Right ventricle myocardium inferior (tissue), 1 donor: ENCODE measurements at regions of chr3 and their contacts with region 1.

Region 1: DNA sequence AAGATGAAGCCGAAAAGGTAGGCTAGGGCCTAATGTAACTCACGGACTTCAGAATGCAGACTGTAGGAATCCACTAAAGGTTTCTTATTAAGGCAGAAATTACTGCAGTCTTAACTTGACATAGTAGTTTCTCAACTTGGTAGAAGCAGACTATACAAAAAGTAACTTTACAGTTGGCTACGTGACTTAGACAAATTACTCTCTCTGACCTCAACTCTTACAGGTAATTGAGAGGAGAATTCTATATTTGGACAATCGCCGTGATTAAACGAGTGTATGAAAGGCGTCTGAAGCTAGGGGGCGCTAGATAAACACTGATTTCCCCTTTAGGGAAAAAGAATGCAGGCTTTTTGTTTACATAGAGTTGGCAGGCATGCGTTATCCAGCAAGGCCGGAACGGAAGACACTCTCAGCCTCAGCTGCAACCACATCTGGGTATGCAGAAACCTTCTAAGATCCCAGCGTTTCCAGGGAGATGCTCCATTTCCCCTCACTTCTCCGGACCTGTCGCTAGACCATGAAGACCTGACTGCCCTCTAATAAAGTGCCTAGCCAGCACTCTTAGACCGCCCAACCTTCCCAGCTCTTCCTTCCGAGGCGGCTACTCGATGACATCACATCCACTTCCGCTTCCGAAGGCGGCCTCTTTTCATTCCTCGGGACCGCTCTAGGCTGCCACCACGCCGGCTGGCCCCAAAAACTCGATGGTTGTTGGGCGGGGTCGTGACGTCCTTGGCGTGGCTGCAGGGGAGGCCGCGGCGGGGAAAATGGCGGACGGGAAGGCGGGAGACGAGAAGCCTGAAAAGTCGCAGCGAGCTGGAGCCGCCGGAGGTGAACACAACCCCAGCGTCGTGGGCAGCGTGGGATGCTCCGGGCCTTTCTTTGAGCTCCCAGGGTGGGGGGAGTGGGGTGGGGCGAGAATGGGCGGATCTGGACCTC is at the start of gene PCNP:
- DNase-seq: peak; percentile 99
- ATAC-seq: peak; percentile 98
- total RNA-seq, gene PCNP: 125 TPM

Region 2: GRCh38 chr3:101512646-101513418 is 60.9 kb before region 1 on chr3 and contains the start of gene SENP7:
- intact Hi-C with region 1: loop called (anchors 5 kb)
- DNase-seq: peak; percentile 91
- ATAC-seq: peak; percentile 85
- total RNA-seq, gene SENP7: 10.3 TPM

Region 3: DNA sequence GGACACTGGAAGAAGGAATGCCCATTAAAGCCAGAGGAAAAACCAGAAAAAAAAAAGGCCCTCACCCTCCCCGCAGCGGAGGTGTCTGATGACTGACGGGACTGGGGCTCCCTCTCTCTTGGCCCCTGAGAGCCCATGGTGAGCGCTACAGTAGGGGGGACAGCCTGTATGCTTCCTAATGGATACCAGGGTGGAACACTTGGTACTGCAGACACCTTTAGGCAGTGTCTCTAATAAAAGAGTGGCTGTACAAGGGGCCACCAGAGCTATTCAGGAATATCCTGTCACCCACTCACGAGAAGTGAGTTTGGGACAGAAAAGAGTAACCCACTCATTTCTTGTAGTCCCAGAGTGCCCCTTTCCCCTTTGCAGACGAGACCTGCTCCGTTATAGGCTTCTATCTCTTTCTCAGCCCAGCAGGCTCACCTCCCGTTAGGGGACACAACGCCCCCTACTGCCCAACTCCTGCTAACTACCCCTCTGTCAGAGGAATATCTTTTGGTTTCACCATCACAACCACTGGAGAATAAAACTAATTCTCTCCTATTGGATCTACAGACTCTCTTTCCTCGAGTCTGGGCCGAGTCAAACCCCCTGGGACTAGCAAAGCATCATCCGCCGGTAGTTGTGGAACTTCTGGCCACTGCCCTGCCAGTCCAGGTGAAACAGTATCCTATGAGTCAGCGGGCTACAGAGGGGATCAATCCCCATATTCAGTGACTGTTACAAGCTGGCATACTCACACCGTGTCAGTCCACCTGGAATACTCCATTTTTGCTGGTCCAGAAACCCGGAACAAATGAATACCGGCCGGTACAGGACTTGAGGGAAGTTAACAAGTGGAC is 62.5 kb after region 1 on chr3:
- intact Hi-C with region 1: loop called (anchors 5 kb)
- DNase-seq: no peak
- ATAC-seq: peak; percentile 63

Region 4: GRCh38 chr3:101676765-101677435 is 103.2 kb after region 1 on chr3 and contains the start of gene ZBTB11:
- intact Hi-C with region 1: loop called (anchors 2 kb)
- DNase-seq: peak; percentile 99
- ATAC-seq: peak; percentile 95
- total RNA-seq, gene ZBTB11: 9.7 TPM